ENCODE measurements at regions of chr5 and their contacts with region 1.

Region 1: DNA sequence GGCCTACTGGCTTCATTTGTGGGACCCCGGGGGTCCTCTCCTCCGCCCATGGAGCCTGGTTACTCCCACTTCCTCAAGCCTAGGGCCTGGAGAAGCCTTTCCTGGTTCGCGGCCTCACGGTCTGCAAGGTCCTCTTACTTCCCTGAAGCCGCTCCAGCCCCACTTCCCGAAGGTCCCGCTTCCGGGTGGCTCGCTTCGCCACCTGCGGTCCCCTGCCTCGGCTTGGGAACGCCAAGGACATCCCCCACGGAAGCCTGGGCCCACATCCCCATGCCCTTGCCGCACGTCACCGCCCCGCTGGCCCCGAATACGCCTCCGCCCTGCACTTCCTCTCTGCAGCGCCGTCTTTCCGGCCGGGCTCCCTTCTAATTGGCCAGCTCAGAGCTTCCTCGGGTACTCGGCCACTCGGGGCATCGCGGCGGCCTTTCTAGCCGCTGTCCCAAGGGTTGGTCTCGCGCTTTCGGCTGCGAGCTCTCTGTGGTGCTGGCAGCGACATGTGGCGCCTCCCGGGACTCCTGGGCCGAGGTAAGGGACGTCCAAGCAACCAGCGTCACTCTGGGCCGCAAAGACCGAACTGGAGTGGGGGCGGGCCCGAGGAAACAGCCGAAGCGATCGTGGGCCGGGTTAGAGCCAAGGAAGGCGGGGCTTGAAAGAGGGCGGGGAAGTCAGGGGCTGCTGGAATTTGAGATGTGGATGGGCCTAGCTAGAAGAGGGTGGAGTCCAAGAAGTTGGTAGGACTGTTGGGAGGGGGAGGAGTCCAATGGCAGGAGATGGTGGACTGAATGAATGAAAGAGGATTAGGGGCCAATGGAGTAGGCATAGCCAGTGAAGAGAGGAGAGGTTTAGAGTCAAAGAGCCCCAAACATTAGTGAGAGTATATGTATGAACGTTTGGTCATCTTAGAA is at the start of gene DELE1:
- DNase-seq: peak; percentile 97
- H3K4me3 Mint-ChIP-seq: peak within 1 kb of the TSS; percentile 86
- H3K27ac Mint-ChIP-seq: peak within 1 kb of the TSS; percentile 87
- H3K4me1 Mint-ChIP-seq: peaks cover 31% of the 10 kb centered on the region
- H3K27me3 Mint-ChIP-seq: no peaks in the 10 kb centered on the region
- total RNA-seq, gene DELE1: 66.7 and 72.0 TPM in 2 replicates

Region 2: DNA sequence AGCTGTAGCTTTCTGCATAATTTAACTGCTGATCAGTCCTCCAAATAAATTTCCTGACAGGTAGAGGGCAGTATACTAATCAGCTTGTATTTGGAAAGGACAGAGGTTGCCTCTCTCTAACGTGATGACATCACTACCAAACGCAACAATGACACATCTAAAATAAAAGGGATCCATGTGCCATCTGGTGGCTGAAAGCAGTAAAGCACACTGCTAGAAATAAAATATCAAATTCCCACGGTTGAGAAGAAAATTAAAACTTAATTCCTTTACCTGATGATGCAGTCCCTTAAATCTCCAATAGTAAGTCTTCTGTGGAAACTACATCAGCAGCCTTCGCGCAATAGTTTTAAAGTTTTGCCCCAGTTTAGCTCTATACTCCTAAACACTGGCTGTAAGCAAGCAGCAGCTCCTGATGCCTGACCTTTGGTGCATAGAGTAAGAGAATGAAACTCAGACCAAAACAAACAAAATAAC is 359.4 kb before region 1 on chr5:
- intact Hi-C with region 1: loop called (anchors 1 kb)
- DNase-seq: peak; percentile 92
- H3K4me3 Mint-ChIP-seq: no peak overlapping the region
- H3K27ac Mint-ChIP-seq: peak overlapping the region; percentile 86
- H3K4me1 Mint-ChIP-seq: peaks cover 32% of the 10 kb centered on the region
- H3K27me3 Mint-ChIP-seq: no peaks in the 10 kb centered on the region

Region 3: GRCh38 chr5:141910271-141910673 is 13.4 kb before region 1 on chr5:
- intact Hi-C with region 1: no loop called
- DNase-seq: no peak
- H3K4me3 Mint-ChIP-seq: no peak overlapping the region
- H3K27ac Mint-ChIP-seq: no peak overlapping the region
- H3K4me1 Mint-ChIP-seq: peaks cover 6% of the 10 kb centered on the region
- H3K27me3 Mint-ChIP-seq: peaks cover 36% of the 10 kb centered on the region

Measured in activated CD4-positive, alpha-beta T cell treated with anti-CD3 and anti-CD28 coated beads, Interleukin-2, amount 10 ng/mL, durations not matched to agents 24 days and 14 days (primary cell).